Esophagus muscularis mucosa (tissue), 4 donors: ENCODE measurements at regions of chr22 and their contacts with region 1.

Region 1: DNA sequence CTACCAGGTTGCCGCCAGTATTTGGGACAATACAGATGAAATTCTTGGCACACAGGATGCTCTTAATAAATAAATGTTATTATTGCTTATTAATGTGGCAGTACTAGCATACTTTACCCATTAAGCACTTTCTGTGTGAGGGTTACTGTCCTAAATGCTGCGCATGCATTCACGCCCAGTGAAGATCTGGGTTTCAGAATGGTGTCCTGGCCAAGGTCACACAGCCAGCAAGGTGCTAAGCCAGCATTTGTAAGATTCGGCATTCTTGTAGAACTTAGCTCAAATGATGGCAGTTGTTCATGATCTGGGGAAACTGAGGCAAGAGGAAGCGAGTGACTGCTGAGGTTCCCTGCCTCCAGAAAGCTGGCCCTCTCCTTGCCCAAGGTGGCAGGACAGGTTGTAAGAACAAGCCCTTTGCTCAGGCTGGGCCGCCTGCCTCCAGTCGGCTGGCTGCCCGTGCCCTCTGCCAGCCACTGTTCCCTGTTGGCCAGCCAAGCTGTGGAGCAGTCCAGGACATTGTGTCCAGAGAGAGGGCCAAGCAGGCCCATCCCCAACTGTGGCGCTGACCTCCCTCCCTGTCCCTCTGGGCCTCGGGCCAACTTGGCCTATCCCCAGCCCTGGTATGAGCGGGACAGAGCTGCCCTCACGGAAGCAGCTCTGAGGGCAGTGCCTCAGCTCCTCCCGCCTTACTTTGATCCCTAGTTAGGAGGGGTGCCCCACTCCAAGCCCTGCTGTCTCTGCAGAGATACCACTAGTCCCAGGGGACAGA is 28.8 kb downstream of the TOB2 start:
- DNase-seq: no peak
- H3K4me3 ChIP-seq: peak overlapping the region in 3 of 4 donors; percentile 0 to 30 (median 10)
- H3K27ac ChIP-seq: peak overlapping the region; percentile 93 to 100 (median 99)
- H3K4me1 ChIP-seq: peaks cover 49 to 69% (median 63%) of the 10 kb centered on the region in 4 donors
- H3K27me3 ChIP-seq: no peaks in the 10 kb centered on the region
- CTCF ChIP-seq: no peak
- EP300 ChIP-seq: peak; percentile 98
- POLR2A ChIP-seq: no peak

Region 2: DNA sequence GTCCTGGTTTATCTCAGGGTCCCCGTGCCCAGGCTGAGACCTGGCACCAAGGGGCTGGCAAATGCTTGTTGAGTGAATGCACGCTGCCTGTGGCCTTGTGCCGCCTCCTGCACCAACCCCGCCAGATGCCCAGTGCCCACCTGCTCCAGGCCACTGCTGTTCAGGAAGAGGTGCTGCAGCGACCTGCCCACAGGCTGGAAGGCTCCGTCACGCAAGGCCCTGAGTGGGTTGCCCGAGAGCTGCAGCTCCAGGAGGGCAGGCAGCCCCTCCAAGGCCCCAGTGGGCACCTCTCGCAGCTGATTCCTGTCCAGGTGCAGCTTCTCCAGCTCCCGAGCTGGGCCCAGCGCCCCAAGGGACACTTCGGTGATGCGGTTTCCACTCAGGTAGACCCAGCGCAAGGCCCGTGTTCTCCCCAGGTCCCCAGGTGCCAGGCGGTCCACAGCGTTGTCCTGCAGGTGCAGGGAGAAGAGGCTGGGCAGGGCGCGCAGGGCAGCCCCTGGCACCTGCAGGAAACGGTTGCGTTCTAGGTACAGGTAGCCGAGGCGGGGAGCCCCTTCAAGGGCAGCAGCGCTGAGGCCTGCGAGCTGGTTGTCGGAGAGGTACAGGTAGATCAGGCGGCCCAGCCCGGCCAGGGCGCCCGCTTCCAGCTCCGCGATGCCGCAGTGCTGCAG is 180.6 kb before region 1 on chr22:
- intact Hi-C with region 1: no loop called
- DNase-seq: no peak
- H3K4me3 ChIP-seq: peak overlapping the region; percentile 54 to 64 (median 58)
- H3K27ac ChIP-seq: peak overlapping the region in 3 of 4 donors; percentile 33 to 64 (median 62)
- H3K4me1 ChIP-seq: peaks cover 25 to 31% (median 27%) of the 10 kb centered on the region in 4 donors
- H3K27me3 ChIP-seq: no peaks in the 10 kb centered on the region
- CTCF ChIP-seq: no peak
- EP300 ChIP-seq: no peak
- POLR2A ChIP-seq: no peak

Region 3: DNA sequence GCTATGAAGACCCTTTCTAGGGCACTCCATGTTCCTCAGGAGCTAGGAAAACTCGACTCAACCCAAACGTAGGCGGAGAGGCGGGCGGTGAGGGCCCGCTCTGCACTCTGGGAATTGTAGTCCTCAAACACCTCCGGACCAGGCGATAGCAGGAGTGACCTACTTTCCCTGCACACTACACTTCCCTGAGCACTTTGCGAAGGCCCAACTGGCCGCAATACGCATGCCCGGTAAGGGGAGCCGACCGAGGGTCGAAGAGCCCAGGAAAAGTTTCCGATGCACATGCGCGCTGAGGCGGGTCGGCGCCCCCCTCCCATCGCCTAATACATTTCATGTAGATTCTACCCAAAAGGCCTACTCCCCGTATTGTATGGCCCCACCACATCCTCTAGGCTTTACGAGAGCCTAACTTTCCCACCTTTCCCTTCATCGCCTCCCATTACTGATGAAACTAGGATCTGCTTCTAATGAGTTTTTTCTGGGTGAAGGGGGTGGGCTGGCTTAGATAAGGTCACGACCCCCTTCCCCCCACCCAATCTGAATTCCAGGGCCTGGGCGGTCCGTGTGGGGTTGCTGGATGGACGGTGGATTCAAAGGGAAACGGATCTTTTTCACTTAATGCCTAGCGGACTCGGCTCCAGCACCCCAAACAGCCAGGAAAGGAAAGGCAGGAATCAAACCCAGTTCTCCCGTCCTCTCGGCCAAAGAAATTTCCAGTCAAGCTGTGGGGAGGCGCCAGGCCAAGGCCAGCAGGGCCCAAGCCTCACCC is 26.7 kb after region 1 on chr22:
- intact Hi-C with region 1: loop called (anchors 2 kb)
- DNase-seq: peak; percentile 98
- H3K4me3 ChIP-seq: peak overlapping the region; percentile 88 to 100 (median 98)
- H3K27ac ChIP-seq: peak overlapping the region; percentile 99 to 100 (median 100)
- H3K4me1 ChIP-seq: peaks cover 47 to 55% (median 53%) of the 10 kb centered on the region in 4 donors
- H3K27me3 ChIP-seq: peaks cover 0 to 5% (median 0%) of the 10 kb centered on the region in 4 donors
- CTCF ChIP-seq: peak in 1 of 3 experiments; percentile 4
- EP300 ChIP-seq: no peak
- POLR2A ChIP-seq: no peak